Heart left ventricle (tissue), 16 donors: ENCODE measurements at regions of chr17 and their contacts with region 1.

Region 1: DNA sequence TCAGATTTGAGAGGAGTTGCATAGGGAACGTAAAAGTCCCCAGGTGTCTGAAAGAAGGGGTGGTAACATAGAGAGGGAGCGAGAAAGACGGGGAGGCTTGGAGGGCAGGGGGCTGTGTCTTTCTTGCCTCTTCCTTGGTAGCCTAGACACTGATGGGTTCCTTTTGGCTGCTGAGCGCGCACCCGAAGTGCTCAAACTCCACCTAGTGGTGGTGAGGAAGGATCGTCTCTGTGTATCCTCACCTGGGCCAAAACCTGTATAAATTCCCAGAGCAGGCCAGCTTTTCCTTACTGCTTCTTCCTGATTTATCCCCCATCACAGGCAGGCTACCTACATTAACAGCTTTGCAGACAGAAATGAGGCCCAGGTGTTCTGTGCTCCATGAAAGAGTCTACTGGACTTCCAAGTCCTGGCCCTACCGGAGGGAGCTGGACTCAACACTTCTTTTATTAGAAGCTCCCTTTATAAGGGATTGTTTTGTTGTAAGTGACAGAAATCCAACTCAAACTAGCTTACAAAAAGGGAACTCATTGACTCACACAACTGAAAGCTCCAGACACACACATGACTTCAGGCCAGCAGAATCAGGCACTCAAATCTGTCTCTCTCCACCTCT is 5.5 kb upstream of the SLC25A35 start:
- DNase-seq: peak in 4 of 5 donors; percentile 51 to 79 (median 62)
- ATAC-seq: peak; percentile 82 to 92 (median 90)
- H3K4me3 ChIP-seq: no peak overlapping the region
- H3K27ac ChIP-seq: no peak overlapping the region
- H3K4me1 ChIP-seq: peaks cover 0 to 6% (median 0%) of the 10 kb centered on the region in 12 donors
- H3K27me3 ChIP-seq: no peaks in the 10 kb centered on the region
- CTCF ChIP-seq: peak; percentile 74 to 87 (median 80)
- POLR2A ChIP-seq: no peak

Region 2: DNA sequence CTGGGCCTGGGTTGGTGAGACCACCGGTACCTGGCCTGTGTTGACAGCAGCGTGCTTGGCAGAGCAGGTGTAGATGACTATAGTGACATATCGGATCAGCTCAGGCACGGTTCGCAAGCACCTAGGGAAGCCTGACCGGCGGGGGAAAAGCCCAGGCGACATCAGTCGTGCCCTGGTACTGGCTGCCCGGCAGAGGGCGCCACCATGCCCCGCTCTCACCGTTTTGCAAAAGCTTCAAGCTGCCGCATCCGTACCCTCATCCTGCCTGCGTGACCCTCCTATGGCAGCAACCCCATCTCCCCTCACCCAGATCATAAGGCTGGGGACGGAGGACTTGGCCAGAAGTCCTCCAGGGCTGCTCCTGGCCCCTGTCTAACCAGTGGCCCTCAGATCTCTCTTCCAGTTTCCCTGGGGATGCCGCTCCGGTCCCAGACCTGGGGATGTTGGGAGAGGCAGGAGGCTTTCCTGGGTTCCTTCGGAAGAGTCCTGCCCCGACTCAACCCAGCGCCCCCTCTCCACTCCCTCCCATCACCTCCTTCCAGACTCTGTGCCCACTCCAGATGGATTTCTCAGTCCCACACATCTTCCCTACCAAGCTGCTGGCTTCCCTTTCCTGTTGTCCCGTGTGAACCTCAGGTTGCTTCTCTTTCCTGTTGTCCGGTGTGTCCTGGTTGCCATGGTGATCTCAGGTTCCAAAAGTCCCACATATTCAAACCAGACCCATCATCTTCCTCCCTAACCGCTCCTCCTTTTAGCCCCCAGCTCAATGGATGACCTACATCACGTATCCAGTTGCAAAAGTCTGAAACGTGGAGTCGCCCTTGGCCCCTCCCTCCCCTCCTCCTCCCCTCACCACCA is 226.9 kb before region 1 on chr17:
- intact Hi-C with region 1: loop called in 3 of 10 experiments (anchors 5 to 10 kb)
- DNase-seq: peak; percentile 57 to 87 (median 66)
- ATAC-seq: peak in 3 of 4 donors; percentile 55 to 79 (median 78)
- H3K4me3 ChIP-seq: peak overlapping the region in 2 of 12 donors; percentile 6 to 34
- H3K27ac ChIP-seq: no peak overlapping the region
- H3K4me1 ChIP-seq: peaks cover 0 to 31% (median 16%) of the 10 kb centered on the region in 12 donors
- H3K27me3 ChIP-seq: peaks cover 28 to 84% (median 72%) of the 10 kb centered on the region in 9 donors
- CTCF ChIP-seq: peak; percentile 71 to 97 (median 88)
- POLR2A ChIP-seq: no peak

Region 3: DNA sequence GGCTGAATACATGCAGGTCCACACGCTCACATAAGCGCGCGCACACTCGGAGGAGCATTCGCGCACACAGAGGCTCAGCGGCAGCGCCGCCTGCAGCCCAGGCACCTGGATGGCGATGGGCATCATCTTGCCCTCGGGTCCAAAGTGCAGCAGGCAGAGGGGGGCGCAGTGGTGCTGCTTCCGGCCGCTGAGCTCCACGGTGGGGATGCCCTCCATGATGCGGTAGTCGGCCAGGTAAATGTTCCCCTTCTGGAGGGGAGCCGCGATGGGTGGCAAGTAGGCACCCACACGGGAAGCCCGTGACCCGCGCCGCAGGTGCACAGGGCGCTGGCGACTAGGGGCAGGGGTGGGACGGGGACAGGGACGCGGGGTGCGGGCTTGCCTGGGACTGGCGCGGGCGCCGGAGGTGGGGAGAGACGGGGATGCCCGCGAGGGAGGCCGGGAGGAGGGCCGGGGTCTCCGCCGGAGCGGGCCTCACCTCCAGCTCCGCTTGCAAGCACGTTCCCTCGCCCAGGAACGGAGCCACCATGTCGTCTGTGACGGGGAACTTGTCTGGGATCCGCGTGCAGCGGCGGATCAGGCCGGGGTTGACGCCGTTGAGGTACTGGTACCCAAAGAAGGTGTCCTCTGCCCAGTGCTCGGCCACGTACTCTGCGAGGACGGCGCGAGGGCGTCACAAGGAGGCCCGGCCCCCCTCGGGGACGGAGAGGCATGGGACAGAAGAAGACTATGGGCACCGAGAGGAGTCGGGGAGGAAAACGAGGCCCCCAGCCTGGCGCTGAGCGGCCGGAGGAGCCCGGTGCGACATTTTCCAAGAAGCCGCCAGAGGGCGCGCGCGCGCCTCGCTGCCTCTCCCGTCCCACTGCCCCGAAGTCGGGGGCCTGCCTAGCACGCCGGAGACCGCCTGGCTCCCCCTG is 221.2 kb before region 1 on chr17:
- intact Hi-C with region 1: loop called in 7 of 10 experiments (anchors 5 to 10 kb)
- DNase-seq: peak; percentile 60 to 86 (median 67)
- ATAC-seq: peak; percentile 72 to 93 (median 86)
- H3K4me3 ChIP-seq: peak overlapping the region; percentile 0 to 58 (median 43)
- H3K27ac ChIP-seq: no peak overlapping the region
- H3K4me1 ChIP-seq: peaks cover 0 to 17% (median 12%) of the 10 kb centered on the region in 12 donors
- H3K27me3 ChIP-seq: peaks cover 16 to 98% (median 63%) of the 10 kb centered on the region in 9 donors
- CTCF ChIP-seq: peak; percentile 87 to 99 (median 92)
- POLR2A ChIP-seq: no peak

Region 4: GRCh38 chr17:8237175-8237574 is 63.6 kb before region 1 on chr17:
- intact Hi-C with region 1: no loop called
- DNase-seq: no peak
- ATAC-seq: peak in 1 of 4 donors; percentile 38
- H3K4me3 ChIP-seq: no peak overlapping the region
- H3K27ac ChIP-seq: no peak overlapping the region
- H3K4me1 ChIP-seq: peaks cover 0 to 11% (median 0%) of the 10 kb centered on the region in 12 donors
- H3K27me3 ChIP-seq: no peaks in the 10 kb centered on the region
- CTCF ChIP-seq: no peak
- POLR2A ChIP-seq: no peak

Region 5: DNA sequence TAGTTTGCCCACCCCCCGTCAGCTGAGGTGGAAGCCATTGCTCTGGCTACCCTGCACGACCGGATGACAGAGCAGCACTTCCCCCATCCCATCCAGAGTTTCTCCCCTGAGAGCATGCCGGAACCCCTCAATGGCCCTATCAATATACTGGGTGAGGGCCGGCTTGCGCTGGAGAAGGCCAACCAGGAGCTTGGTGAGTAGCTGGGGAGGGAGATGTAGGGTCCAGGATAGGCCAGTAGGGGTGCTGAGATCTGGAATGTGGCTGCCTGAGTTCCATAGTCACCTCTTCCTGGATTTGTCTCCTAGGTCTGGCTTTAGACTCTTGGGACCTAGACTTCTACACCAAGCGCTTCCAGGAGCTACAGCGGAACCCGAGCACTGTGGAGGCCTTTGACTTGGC is 45.2 kb before region 1 on chr17:
- intact Hi-C with region 1: loop called in 5 of 10 experiments (anchors 1 to 5 kb)
- DNase-seq: no peak
- ATAC-seq: no peak
- H3K4me3 ChIP-seq: no peak overlapping the region
- H3K27ac ChIP-seq: no peak overlapping the region
- H3K4me1 ChIP-seq: peaks cover 0 to 3% (median 0%) of the 10 kb centered on the region in 12 donors
- H3K27me3 ChIP-seq: no peaks in the 10 kb centered on the region
- CTCF ChIP-seq: no peak
- POLR2A ChIP-seq: no peak

Region 6: GRCh38 chr17:8314797-8315763 is 14.3 kb after region 1 on chr17:
- intact Hi-C with region 1: no loop called
- DNase-seq: no peak
- ATAC-seq: no peak
- H3K4me3 ChIP-seq: peak overlapping the region in 8 of 12 donors; percentile 0 to 26 (median 6)
- H3K27ac ChIP-seq: no peak overlapping the region
- H3K4me1 ChIP-seq: peaks cover 0 to 36% (median 17%) of the 10 kb centered on the region in 12 donors
- H3K27me3 ChIP-seq: peaks cover 3 to 50% (median 9%) of the 10 kb centered on the region in 9 donors
- CTCF ChIP-seq: no peak
- POLR2A ChIP-seq: no peak

Region 7: DNA sequence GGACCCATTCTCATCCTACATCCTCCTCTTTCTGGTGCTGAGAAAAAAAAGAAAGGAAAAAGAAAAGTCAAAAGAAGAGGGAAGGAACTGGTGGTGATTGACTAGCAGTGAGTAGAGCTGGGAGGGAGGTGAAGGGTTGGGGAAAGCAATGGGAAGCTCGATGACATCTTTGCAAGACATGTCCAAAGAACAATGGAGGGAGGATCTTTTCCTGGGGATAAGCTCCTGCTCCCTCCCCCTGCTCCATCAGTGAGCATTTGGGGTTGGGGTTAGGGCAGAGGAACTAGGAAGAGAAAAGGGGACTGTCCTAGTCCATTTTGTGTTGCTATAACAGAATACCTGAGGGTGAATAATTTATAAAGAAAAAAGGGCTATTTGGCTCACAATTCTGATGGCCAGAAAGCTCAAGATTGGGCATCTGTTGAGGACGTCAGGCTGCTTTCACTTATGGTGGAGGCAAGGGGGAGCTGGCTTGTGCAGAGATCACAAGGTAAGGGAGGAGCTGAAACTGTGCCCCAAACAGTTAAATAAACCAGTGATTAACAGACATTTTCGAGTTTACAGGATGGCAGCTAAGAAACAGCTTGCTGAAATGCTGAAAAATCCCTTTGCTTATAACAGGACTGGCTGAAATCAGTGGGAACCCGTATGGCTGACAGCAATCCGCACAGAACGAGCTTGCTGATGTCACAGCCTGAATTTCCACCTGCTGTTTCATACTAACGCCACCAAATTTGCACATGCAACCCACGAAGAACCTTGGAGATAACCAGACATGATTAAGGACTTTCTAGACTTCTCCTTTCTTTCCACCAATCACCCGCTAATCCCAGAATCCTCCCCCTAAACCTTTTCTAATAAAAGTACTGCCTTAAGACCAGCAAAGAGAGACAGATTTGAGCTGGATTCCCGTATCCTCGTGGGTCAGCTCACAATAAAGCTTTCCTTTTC is 37.3 kb after region 1 on chr17:
- intact Hi-C with region 1: no loop called
- DNase-seq: no peak
- ATAC-seq: peak in 1 of 4 donors; percentile 38
- H3K4me3 ChIP-seq: no peak overlapping the region
- H3K27ac ChIP-seq: no peak overlapping the region
- H3K4me1 ChIP-seq: no peaks in the 10 kb centered on the region
- H3K27me3 ChIP-seq: no peaks in the 10 kb centered on the region
- CTCF ChIP-seq: no peak
- POLR2A ChIP-seq: no peak